H1 (cell line): ENCODE measurements at regions of chr18 and their contacts with region 1.

Region 1: GRCh38 chr18:47100214-47100831 is 50.0 kb downstream of the HDHD2 start:
- DNase-seq: peak; percentile 66 to 86
- H3K4me3 ChIP-seq: no peak overlapping the region
- H3K27ac ChIP-seq: no peak overlapping the region
- H3K4me1 ChIP-seq: peaks cover 0 to 3% (median 0%) of the 10 kb centered on the region in 4 experiments; a peak in 1 of 7 replicates
- H3K27me3 ChIP-seq: no peaks in the 10 kb centered on the region
- CTCF ChIP-seq: peak; percentile 58 to 91 (median 87)
- EP300 ChIP-seq: no peak
- POLR2A ChIP-seq: no peak
- RAD21 ChIP-seq: peak; percentile 94 to 96

Region 2: GRCh38 chr18:46917108-46917802 is 183.1 kb before region 1 on chr18 and contains the starts of genes KATNAL2 and PIAS2:
- CTCF ChIA-PET with region 1: no interaction called
- POLR2A ChIA-PET with region 1: no interaction called
- DNase-seq: peak; percentile 21 to 87
- H3K4me3 ChIP-seq: peak within 1 kb of the TSS; percentile 75 to 85 (median 82)
- H3K27ac ChIP-seq: peak within 1 kb of the TSS; percentile 96
- H3K4me1 ChIP-seq: peaks cover 3 to 14% (median 10%) of the 10 kb centered on the region in 4 experiments; a peak in 5 of 7 replicates
- H3K27me3 ChIP-seq: no peaks in the 10 kb centered on the region
- CTCF ChIP-seq: no peak
- EP300 ChIP-seq: 0 out of 3 replicates have a peak, but pooled peaks of 1 of the 2 experiments have one; percentile 11
- POLR2A ChIP-seq: peak; percentile 85 to 87
- RAD21 ChIP-seq: no peak; a peak in 1 of 4 replicates
- total RNA-seq, gene KATNAL2: 8.8 and 15.2 TPM in 2 replicates
- total RNA-seq, gene PIAS2: 52.9 and 53.9 TPM in 2 replicates

Region 3: DNA sequence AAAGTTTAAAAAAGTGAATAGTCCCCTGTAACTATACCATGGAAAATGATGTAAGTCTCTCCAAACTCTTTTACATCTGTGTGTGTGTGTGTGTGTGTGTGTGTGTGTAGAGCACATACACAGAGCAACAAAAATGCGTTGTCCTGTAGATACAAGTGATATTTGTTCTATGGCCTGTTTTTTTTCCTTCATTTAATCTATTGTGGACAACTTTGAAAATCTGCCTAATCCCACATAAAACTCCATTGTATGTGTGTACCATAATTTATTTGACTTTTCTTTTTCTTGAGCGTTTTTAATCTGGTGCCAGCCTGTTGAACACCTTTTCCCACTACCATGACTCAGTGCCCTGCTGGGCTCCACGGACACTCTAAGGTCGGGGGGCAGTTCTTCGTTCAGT is 12.6 kb before region 1 on chr18:
- CTCF ChIA-PET with region 1: interaction called, 15 read pairs
- POLR2A ChIA-PET with region 1: interaction called, 4 read pairs
- DNase-seq: no peak
- H3K4me3 ChIP-seq: no peak overlapping the region
- H3K27ac ChIP-seq: no peak overlapping the region
- H3K4me1 ChIP-seq: peaks cover 0 to 2% (median 0%) of the 10 kb centered on the region in 4 experiments; a peak in 2 of 7 replicates
- H3K27me3 ChIP-seq: no peaks in the 10 kb centered on the region
- CTCF ChIP-seq: no peak
- EP300 ChIP-seq: no peak
- POLR2A ChIP-seq: no peak
- RAD21 ChIP-seq: no peak

Region 4: DNA sequence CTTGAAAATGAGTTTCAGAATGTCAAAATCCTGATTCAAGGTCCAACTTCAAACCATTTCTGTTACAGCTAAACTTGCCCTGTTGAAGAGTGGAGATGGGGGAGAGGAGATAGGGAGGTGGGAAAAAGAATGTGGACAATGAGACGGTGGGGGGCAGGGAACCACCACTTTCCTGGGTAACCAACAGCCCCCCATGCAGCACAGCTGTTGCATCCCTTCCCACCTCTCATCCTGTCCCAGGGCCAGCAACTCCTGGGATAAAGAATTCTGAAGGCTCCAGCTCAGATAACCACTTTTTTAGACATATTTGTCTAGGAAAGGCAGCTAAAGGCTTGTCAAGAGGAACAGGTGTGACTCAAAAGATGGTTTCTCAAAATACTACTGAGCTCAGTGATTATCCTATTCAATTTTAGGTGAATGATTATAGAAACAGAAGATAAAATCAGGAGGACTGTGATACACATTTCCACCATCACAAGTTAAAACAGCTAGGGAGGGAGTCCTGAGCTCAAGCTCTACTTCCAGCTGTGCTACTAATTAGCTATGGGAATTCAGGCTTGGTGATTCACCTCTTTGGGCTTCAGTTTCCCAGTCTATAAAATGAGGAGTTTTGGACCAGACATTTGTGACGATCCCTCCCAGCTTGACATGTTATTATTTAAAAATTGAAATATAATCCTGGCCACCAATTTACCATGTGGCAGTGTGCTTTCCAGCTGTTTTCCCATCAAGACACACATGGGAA is 13.6 kb after region 1 on chr18:
- CTCF ChIA-PET with region 1: interaction called, 18 read pairs
- POLR2A ChIA-PET with region 1: interaction called, 3 read pairs
- DNase-seq: no peak
- H3K4me3 ChIP-seq: no peak overlapping the region
- H3K27ac ChIP-seq: no peak overlapping the region
- H3K4me1 ChIP-seq: peaks cover 5 to 23% (median 12%) of the 10 kb centered on the region in 4 experiments
- H3K27me3 ChIP-seq: no peaks in the 10 kb centered on the region
- CTCF ChIP-seq: no peak
- EP300 ChIP-seq: no peak
- POLR2A ChIP-seq: no peak
- RAD21 ChIP-seq: no peak